Tibial artery (tissue), 4 donors: ENCODE measurements at regions of chr10 and their contacts with region 1.

Region 1: DNA sequence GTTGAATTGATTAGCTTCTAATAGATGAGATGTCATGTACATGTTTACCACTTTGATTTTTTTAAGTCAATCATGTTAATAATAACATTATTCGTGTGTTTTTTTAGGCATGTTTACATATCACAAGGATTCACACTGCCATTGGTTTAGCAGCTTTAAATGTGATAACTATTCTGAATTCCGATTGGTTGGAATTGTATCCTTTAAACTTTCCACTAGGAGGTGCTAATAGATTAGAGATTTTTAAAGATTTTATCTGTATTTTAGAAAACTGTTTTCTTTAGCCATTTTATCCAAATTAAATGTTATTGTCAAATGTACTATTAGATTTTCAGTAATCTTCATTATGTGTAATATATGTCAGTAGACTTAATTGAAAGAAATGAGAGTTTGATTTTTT is 83.2 kb downstream of the HECTD2 start:
- DNase-seq: no peak
- H3K4me3 ChIP-seq: no peak overlapping the region
- H3K27ac ChIP-seq: no peak overlapping the region
- H3K4me1 ChIP-seq: peaks cover 0 to 13% (median 0%) of the 10 kb centered on the region in 4 donors
- H3K27me3 ChIP-seq: no peaks in the 10 kb centered on the region
- CTCF ChIP-seq: peak; percentile 47 to 72

Region 2: GRCh38 chr10:91328320-91328984 is 164.9 kb before region 1 on chr10:
- intact Hi-C with region 1: no loop called
- DNase-seq: no peak
- H3K4me3 ChIP-seq: no peak overlapping the region
- H3K27ac ChIP-seq: no peak overlapping the region
- H3K4me1 ChIP-seq: no peaks in the 10 kb centered on the region
- H3K27me3 ChIP-seq: no peaks in the 10 kb centered on the region
- CTCF ChIP-seq: no peak

Region 3: GRCh38 chr10:91551856-91552255 is 58.5 kb after region 1 on chr10:
- intact Hi-C with region 1: loop called (anchors 10 kb)
- DNase-seq: peak in 1 of 2 donors; percentile 53
- H3K4me3 ChIP-seq: peak overlapping the region in 1 of 2 donors; percentile 7
- H3K27ac ChIP-seq: peak overlapping the region; percentile 27 to 37
- H3K4me1 ChIP-seq: peaks cover 0 to 34% (median 26%) of the 10 kb centered on the region in 4 donors
- H3K27me3 ChIP-seq: no peaks in the 10 kb centered on the region
- CTCF ChIP-seq: peak; percentile 34 to 44

Region 4: GRCh38 chr10:91694170-91694794 is 201.0 kb after region 1 on chr10:
- intact Hi-C with region 1: loop called (anchors 10 kb)
- DNase-seq: no peak
- H3K4me3 ChIP-seq: no peak overlapping the region
- H3K27ac ChIP-seq: no peak overlapping the region
- H3K4me1 ChIP-seq: peaks cover 3 to 16% (median 11%) of the 10 kb centered on the region in 4 donors
- H3K27me3 ChIP-seq: no peaks in the 10 kb centered on the region
- CTCF ChIP-seq: peak; percentile 61 to 66

Region 5: GRCh38 chr10:92381543-92381954 is 888.2 kb after region 1 on chr10:
- intact Hi-C with region 1: no loop called
- DNase-seq: no peak
- H3K4me3 ChIP-seq: no peak overlapping the region
- H3K27ac ChIP-seq: no peak overlapping the region
- H3K4me1 ChIP-seq: no peaks in the 10 kb centered on the region
- H3K27me3 ChIP-seq: no peaks in the 10 kb centered on the region
- CTCF ChIP-seq: no peak